ENCODE measurements at regions of chr13 and their contacts with region 1.

Region 1: DNA sequence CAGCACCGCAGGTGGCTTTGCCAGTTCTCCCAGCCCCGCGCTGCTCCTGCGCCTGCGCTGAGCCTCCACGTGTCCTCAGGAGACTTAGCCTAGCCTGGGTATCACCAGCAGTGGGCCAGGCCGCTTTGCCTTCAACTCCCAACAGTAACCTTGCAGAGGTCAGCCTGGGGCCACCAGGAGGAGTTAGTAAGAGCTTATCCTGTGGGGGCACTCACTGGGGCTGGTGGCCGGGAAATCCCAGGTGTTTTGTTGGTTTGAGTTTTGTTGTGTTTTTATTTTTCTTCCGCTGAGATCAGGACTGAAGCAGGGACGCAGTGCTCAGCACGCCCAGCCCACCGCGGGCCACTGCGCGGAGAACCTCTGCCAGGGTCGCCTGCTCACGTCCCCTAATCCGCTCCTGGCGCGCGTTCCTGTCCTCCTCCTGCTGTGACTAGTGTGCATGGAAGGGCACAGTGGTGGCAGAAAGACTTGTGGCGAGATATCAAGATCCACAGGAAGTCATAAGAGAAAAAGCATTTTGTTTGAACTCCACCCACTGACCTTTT is 207.4 kb upstream of the RFC3 start:
- DNase-seq: no peak
- ATAC-seq: peak; percentile 68
- H3K4me3 ChIP-seq: no peak overlapping the region
- H3K27ac ChIP-seq: no peak overlapping the region
- H3K4me1 ChIP-seq: no peaks in the 10 kb centered on the region
- H3K27me3 ChIP-seq: no peaks in the 10 kb centered on the region
- CTCF ChIP-seq: no peak

Region 2: GRCh38 chr13:33340629-33341028 is 269.9 kb before region 1 on chr13:
- CTCF ChIA-PET with region 1: no interaction called
- POLR2A ChIA-PET with region 1: interaction called, 10 read pairs
- in situ Hi-C with region 1: no loop called
- intact Hi-C with region 1: no loop called
- DNase-seq: no peak
- ATAC-seq: no peak
- H3K4me3 ChIP-seq: no peak overlapping the region
- H3K27ac ChIP-seq: no peak overlapping the region
- H3K4me1 ChIP-seq: no peaks in the 10 kb centered on the region
- H3K27me3 ChIP-seq: no peaks in the 10 kb centered on the region
- CTCF ChIP-seq: no peak

Region 3: GRCh38 chr13:33645591-33646554 is 35.3 kb after region 1 on chr13:
- CTCF ChIA-PET with region 1: no interaction called
- POLR2A ChIA-PET with region 1: interaction called, 26 read pairs
- in situ Hi-C with region 1: no loop called
- intact Hi-C with region 1: no loop called
- DNase-seq: no peak
- ATAC-seq: no peak
- H3K4me3 ChIP-seq: no peak overlapping the region
- H3K27ac ChIP-seq: no peak overlapping the region
- H3K4me1 ChIP-seq: no peaks in the 10 kb centered on the region; the same call in 1 of the 2 replicates
- H3K27me3 ChIP-seq: no peaks in the 10 kb centered on the region
- CTCF ChIP-seq: no peak

Region 4: DNA sequence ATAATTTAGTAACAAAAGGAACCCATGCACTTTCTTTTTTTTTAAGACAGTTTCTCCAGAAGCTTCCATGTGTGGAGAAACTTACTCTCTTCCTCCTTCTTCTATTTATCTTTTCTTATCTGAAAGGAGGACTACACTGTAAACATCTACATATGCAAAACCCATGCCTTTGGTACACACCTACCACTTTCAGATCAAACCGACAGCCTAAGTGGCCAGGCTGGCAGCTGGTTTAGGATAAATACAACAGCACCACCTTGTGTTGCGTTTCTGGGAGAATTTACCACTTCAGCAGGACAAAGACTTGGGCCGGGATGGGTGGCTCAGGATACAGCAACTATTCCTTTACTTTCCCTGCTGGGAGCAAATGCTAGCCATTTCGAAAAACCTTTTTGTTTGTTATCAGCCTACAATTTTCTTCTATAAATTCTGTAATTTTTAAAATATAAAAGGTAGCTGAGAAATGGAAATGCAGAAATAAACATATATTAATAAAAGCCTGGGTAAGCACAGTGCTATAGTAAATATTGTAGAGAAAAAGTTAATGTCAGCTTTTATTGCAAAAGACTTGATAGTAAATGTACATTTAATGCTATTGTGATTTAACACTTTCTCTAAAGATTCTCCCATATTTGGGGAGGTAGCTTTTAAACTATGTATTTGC is 113.4 kb after region 1 on chr13:
- CTCF ChIA-PET with region 1: interaction called, 4 read pairs
- POLR2A ChIA-PET with region 1: no interaction called
- in situ Hi-C with region 1: no loop called
- intact Hi-C with region 1: loop called (anchors 10 kb)
- DNase-seq: peak; percentile 45
- ATAC-seq: peak; percentile 98
- H3K4me3 ChIP-seq: no peak overlapping the region
- H3K27ac ChIP-seq: peak overlapping the region; percentile 48; the same call in 1 of the 2 replicates
- H3K4me1 ChIP-seq: peaks cover 6% of the 10 kb centered on the region; the same call in 1 of the 2 replicates
- H3K27me3 ChIP-seq: no peaks in the 10 kb centered on the region
- CTCF ChIP-seq: peak; percentile 78